ENCODE measurements at regions of chr17 and their contacts with region 1.

Region 1: GRCh38 chr17:14409292-14409691 is 108.4 kb downstream of the HS3ST3B1 start:
- DNase-seq: no peak
- ATAC-seq: no peak
- H3K4me3 ChIP-seq: no peak overlapping the region
- H3K4me3 Mint-ChIP-seq: no peak overlapping the region
- H3K27ac ChIP-seq: no peak overlapping the region
- H3K27ac Mint-ChIP-seq: no peak overlapping the region
- H3K4me1 ChIP-seq: peaks cover 13% of the 10 kb centered on the region
- H3K4me1 Mint-ChIP-seq: peaks cover 22% of the 10 kb centered on the region
- H3K27me3 ChIP-seq: no peaks in the 10 kb centered on the region
- H3K27me3 Mint-ChIP-seq: no peaks in the 10 kb centered on the region
- CTCF ChIP-seq: no peak

Region 2: DNA sequence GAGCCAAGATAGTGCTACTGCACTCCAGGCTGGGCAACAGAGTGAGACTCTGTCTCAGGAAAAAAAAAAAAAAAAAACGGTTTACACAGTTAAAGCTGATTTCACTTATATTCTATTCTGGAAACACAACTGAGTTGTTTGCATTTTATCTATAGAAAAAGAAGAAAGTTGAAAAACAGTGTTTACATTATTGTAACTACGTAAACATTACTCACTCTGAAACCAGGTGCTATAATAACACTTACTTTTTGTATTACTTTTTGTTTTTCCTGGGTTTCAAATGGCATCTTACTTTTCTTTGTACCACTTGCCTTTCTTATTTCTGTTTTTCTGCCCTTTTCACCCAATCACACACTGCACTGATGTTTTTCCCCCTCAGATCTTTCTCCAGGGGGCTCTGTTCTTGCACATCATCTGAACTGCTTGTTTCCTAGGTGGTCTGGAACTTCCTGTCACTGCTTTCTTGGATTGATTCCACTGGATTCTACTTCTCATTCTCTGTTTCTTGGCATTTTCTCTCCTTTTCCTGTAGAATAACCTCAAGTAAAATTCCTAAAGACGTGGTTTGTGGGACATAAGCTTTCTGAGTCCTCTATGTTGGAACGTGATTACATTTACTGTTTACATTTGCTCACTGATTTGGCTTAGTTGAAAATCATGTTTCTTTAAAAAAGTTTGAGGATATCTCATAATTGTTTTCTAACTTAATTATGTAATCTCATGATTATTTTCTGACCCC is 33.7 kb after region 1 on chr17:
- CTCF ChIA-PET with region 1: no interaction called
- POLR2A ChIA-PET with region 1: no interaction called
- intact Hi-C with region 1: loop called in 1 of 2 experiments (anchors 5 kb)
- DNase-seq: no peak
- ATAC-seq: no peak
- H3K4me3 ChIP-seq: no peak overlapping the region
- H3K4me3 Mint-ChIP-seq: no peak overlapping the region
- H3K27ac ChIP-seq: no peak overlapping the region
- H3K27ac Mint-ChIP-seq: no peak overlapping the region
- H3K4me1 ChIP-seq: no peaks in the 10 kb centered on the region
- H3K4me1 Mint-ChIP-seq: peaks cover 7% of the 10 kb centered on the region
- H3K27me3 ChIP-seq: no peaks in the 10 kb centered on the region
- H3K27me3 Mint-ChIP-seq: no peaks in the 10 kb centered on the region
- CTCF ChIP-seq: no peak

Region 3: GRCh38 chr17:14545156-14545906 is 136.0 kb after region 1 on chr17:
- CTCF ChIA-PET with region 1: no interaction called
- POLR2A ChIA-PET with region 1: interaction called, 3 read pairs
- intact Hi-C with region 1: loop called in 1 of 2 experiments (anchors 10 kb)
- DNase-seq: no peak
- ATAC-seq: peak; percentile 58
- H3K4me3 ChIP-seq: peak overlapping the region in 1 of 2 experiments; percentile 12
- H3K4me3 Mint-ChIP-seq: peak overlapping the region; percentile 72
- H3K27ac ChIP-seq: no peak overlapping the region
- H3K27ac Mint-ChIP-seq: peak overlapping the region; percentile 41
- H3K4me1 ChIP-seq: no peaks in the 10 kb centered on the region
- H3K4me1 Mint-ChIP-seq: peaks cover 13% of the 10 kb centered on the region
- H3K27me3 ChIP-seq: no peaks in the 10 kb centered on the region
- H3K27me3 Mint-ChIP-seq: no peaks in the 10 kb centered on the region
- CTCF ChIP-seq: no peak